Psoas muscle (tissue), 8 donors: ENCODE measurements at regions of chr6 and their contacts with region 1.

Region 1: DNA sequence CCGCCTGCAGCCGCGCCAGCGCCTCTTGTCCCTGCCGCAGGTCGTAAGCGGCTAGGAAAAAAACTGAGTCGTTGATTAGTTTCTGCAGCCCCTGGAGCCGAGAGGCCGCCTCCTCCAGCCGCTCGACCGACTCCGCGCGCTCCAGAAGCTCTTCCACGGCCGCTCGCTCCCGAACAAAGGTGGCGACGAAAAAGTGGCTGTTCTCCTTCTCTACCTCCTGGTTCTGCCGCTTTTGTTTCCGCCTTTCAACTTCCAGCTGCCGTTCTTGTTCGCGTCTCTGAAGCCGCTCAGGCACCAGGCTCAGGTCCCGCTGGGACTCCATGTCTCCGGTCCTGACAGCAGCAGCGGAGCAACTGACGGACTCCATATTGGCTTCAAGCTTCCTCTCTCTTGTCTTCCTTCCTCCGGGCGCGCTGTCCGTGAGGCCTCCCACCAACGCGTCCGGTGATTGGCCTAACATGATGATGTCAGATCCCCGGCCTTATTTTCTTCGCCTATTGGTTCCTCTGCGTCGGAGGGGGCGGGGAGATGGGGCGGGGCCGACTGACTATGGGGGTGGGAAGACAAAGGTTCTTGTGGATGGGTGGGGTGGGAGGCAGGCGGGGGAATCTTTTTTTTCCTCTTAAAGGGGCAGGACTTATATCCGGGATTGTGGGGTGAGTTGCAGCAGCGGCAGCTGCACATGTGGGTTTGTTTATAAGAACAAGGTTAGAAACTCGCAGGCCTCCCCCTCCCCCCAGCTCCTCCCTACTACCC is at the start of gene TBCC:
- DNase-seq: peak; percentile 95 to 97
- ATAC-seq: peak; percentile 86 to 91 (median 87)
- H3K4me3 ChIP-seq: peak within 1 kb of the TSS; percentile 97
- H3K27ac ChIP-seq: peak within 1 kb of the TSS; percentile 99
- H3K4me1 ChIP-seq: peaks cover 33% of the 10 kb centered on the region
- H3K27me3 ChIP-seq: no peaks in the 10 kb centered on the region
- CTCF ChIP-seq: no peak
- total RNA-seq, gene TBCC: 17.0 to 26.9 (median 18.9) TPM

Region 2: GRCh38 chr6:42777126-42777822 is 31.4 kb after region 1 on chr6:
- intact Hi-C with region 1: loop called (anchors 1 to 2 kb)
- DNase-seq: no peak
- ATAC-seq: no peak
- H3K4me3 ChIP-seq: no peak overlapping the region
- H3K27ac ChIP-seq: no peak overlapping the region
- H3K4me1 ChIP-seq: no peaks in the 10 kb centered on the region
- H3K27me3 ChIP-seq: no peaks in the 10 kb centered on the region
- CTCF ChIP-seq: no peak

Region 3: DNA sequence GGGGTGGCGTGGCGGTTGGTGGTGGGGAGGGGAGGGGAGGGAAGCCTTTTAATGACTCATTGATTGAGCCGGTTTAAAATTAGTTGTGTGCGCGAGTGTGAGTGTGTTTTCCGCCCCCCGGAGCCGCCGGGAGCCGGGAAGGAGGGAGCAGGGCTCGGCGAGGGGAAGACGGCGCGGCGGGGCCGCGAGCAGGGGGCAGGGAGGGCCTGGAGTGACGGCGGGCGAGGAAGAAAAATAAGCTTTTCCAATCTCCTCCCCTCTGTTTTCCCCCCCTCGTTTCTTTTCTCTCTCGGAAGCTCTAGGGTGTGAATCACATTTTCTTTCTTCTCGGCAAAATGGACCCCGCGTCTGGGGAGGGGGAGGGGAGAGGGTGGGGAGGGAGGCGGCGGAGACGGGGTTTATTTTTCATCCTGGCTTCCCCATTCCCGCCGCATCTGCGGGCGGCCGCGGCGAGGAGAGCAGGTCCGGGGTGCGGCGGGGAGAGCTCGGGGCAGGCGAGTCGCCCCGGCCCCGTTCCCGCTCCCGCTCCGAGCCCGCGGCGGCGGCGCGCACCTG is 36.8 kb after region 1 on chr6:
- intact Hi-C with region 1: loop called (anchors 1 to 2 kb)
- DNase-seq: peak; percentile 80 to 92
- ATAC-seq: peak; percentile 74 to 77 (median 76)
- H3K4me3 ChIP-seq: peak overlapping the region; percentile 90
- H3K27ac ChIP-seq: peak overlapping the region; percentile 100
- H3K4me1 ChIP-seq: peaks cover 24% of the 10 kb centered on the region
- H3K27me3 ChIP-seq: no peaks in the 10 kb centered on the region
- CTCF ChIP-seq: no peak